ENCODE measurements at regions of chr4 and their contacts with region 1.

Region 1: DNA sequence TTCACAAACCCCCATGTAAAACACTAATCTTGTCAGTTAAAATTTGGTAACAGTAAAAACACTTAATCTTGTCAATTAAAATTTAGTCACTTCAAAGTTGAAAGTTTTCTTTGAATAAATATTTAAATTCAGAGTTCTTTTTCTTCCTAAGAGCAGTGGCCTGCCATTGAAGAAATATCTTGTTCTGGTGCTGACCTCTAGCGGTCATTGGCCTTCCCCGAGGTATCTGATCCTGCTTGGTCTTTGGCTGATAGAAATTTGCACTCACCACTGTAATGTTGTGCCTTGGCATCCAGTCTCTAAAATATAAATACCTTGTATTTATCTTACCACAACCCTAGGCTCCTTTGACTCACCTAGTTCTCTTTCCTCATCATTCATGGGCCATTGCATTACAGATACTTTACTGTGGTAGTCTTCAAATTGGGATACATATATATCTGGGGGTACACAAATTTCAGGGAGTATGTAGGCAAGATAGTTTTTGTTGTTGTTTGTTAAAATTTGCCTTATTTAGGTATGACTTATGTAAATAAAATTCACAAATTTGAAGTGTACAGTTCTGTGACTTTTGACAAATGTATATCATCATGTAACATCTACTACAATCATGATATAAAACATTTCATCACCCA is 6.7 kb upstream of the ART3 start:
- DNase-seq: no peak
- H3K4me3 ChIP-seq: no peak overlapping the region
- H3K27ac ChIP-seq: no peak overlapping the region
- H3K4me1 ChIP-seq: no peaks in the 10 kb centered on the region
- H3K27me3 ChIP-seq: no peaks in the 10 kb centered on the region
- CTCF ChIP-seq: peak; percentile 41 to 88 (median 81)
- POLR2A ChIP-seq: no peak

Region 2: DNA sequence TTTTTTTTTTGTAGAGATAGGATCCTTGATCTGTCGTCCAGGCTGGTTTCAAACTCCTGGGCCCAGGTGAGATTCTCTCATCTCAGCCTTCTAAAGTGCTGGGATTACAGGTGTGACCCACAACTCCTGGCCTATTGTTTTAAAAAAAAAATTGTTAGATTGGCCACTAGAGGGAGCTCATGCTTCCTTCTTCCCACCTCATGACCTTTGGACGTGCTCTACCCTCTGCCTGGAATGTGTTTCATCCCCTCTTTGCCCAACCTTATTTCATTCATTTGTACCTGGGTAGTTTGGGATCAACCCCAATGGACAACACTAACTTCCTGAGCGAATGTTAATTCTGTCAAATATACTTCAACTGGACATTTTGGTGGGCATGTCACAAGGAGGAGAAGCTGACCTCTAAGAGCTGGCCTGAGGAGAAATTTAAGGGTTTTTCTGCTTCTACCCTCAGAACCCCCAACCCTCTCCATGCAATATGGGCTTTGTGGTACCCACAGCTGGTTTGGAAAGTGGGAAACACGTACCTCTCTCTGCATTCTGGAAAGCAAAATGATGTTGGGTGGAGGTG is 171.9 kb before region 1 on chr4:
- intact Hi-C with region 1: loop called (anchors 10 kb)
- DNase-seq: no peak
- H3K4me3 ChIP-seq: no peak overlapping the region
- H3K27ac ChIP-seq: no peak overlapping the region
- H3K4me1 ChIP-seq: peaks cover 0 to under 1% (median 0%) of the 10 kb centered on the region in 6 donors
- H3K27me3 ChIP-seq: no peaks in the 10 kb centered on the region
- CTCF ChIP-seq: peak in 9 of 11 experiments; percentile 24 to 66 (median 55)
- POLR2A ChIP-seq: no peak

Region 3: DNA sequence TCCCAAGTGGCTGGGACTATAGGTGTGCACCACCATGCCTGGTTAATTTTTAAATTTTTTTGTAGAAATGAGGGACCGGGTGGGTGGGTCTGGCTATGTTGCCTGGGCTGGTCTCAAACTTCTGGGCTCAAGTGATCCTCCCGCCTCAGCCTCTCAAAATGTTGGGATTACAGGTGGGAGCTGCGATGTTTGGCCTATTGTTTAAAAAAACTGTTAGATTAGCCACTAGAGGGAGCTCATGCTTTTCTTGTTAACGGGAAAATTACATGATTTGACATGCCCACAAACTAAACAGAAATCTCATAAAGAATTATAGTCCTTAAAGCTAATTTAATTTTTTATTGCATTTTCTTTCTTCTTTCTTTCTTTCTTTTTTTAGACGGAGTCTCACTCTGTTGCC is 72.0 kb before region 1 on chr4:
- intact Hi-C with region 1: loop called (anchors 2 kb)
- DNase-seq: no peak
- H3K4me3 ChIP-seq: no peak overlapping the region
- H3K27ac ChIP-seq: no peak overlapping the region
- H3K4me1 ChIP-seq: peaks cover 0 to 9% (median 7%) of the 10 kb centered on the region in 6 donors
- H3K27me3 ChIP-seq: no peaks in the 10 kb centered on the region
- CTCF ChIP-seq: peak in 10 of 11 experiments; percentile 25 to 75 (median 56)
- POLR2A ChIP-seq: no peak

Measured in spleen (tissue), 13 donors.